ENCODE measurements at regions of chr4 and their contacts with region 1.

Region 1: GRCh38 chr4:15525054-15525453 is 55.4 kb downstream of the CC2D2A start:
- DNase-seq: peak; percentile 35 to 84
- H3K4me3 ChIP-seq: no peak overlapping the region
- H3K27ac ChIP-seq: peak overlapping the region; percentile 31; the same call in 1 of the 2 replicates
- H3K4me1 ChIP-seq: peaks cover 12% of the 10 kb centered on the region
- H3K27me3 ChIP-seq: no peaks in the 10 kb centered on the region
- CTCF ChIP-seq: no peak

Region 2: DNA sequence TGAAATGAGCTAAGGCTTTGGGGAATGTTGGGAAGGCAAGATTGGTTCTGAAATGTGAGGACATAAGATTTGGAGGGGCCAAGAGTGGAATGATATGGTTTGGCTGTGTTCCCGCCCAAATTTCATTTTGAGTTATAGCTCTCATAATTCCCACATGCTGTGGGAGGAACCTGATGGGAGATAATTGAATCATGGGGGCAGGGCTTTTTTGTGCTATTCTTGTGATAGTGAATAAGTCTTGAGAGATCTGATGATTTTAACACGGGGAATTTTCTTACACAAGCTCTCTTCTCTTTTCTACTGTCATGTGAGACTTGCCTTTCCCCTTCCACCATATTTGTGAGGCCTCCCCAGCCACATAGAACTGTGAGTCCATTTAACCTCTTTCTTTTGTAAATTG is 254.9 kb before region 1 on chr4:
- CTCF ChIA-PET with region 1: no interaction called
- POLR2A ChIA-PET with region 1: interaction called, 10 read pairs
- intact Hi-C with region 1: no loop called
- DNase-seq: no peak
- H3K4me3 ChIP-seq: no peak overlapping the region
- H3K27ac ChIP-seq: no peak overlapping the region
- H3K4me1 ChIP-seq: no peaks in the 10 kb centered on the region
- H3K27me3 ChIP-seq: no peaks in the 10 kb centered on the region
- CTCF ChIP-seq: no peak